ENCODE measurements at regions of chr1 and their contacts with region 1.

Region 1: DNA sequence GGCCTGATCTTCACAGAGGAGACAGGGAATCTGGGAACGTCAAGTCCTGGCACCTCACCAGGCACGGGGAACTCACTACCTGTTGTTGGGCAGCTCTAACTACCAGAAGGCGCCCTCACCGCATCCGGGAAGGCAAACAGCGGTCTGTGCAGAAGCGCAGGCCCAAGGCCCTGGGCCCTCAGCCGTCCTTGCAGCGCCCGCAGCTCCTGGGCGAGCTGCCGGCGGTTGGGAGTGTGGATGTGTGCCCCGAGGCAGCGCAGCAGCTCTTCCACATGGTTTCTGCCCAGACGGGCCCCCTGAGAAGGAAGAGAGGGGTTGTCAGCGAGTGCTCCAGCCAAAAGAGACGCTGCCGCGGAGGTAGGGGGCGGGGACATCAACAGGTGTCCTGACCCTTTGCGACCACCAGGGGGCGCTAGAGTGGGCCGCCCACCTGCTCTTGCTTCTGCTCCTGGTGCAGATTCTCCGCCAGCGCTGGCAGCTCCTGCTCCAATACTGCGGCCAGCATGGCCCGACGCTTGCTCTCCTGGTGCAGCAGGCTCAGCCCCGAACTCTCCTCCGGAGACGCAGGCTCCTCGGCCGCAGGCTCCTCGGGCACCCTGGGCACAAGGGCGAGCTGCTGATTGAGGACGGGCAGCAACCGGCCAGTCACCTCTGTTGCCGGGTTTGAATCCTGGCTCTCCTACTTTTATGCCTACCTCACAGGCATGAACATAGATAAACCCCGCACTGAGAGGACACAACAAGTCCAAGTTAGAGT is 9.3 kb downstream of the MAP3K6 start:
- DNase-seq: peak; percentile 80 to 84 (median 83)
- H3K4me3 ChIP-seq: peak overlapping the region; percentile 44 to 71
- H3K4me3 Mint-ChIP-seq: peak overlapping the region; percentile 74 to 85 (median 80)
- H3K27ac ChIP-seq: peak overlapping the region; percentile 57
- H3K27ac Mint-ChIP-seq: peak overlapping the region; percentile 72 to 90 (median 84)
- H3K4me1 ChIP-seq: peaks cover 47% of the 10 kb centered on the region
- H3K4me1 Mint-ChIP-seq: peaks cover 18 to 56% (median 40%) of the 10 kb centered on the region in 4 donors
- H3K27me3 ChIP-seq: no peaks in the 10 kb centered on the region
- H3K27me3 Mint-ChIP-seq: no peaks in the 10 kb centered on the region

Region 2: DNA sequence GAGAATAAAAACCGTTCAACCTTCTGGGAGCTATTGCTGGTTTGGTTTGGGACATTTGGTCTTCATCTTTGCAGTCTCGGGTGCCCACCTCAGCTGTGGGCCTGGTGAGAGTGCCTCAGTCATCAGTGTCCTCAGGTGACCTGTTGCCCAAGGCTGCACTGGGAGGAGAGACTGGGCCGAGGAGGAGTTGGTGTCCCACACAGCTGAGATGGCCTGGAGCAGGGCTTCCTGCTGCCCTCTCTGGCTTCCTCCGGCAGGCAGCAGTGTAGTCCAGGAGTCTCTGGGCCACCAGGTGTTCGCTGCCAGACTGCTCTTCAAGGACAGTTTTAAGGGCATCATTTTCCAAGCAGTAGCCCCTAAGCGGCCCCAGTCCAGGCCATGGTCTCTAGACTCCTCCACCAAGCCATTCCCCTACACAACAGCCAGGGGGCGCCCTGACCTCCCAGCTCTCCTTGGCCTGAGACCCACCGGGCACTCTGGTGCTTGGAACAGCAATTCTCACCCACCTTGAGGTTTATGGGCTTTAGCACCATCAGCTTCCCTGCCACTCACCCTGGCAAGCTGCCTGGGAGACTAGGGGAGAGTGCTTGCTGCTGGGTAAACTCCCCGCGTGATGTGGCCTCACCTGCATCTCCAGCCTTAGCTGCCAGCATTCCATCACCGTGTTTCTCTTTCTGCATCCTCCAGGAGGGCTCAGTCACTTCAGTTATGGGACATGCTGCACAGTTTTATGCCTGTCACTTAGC is 24.8 kb before region 1 on chr1:
- CTCF ChIA-PET with region 1: interaction called, 63 read pairs
- POLR2A ChIA-PET with region 1: interaction called, 19 read pairs
- intact Hi-C with region 1: no loop called
- DNase-seq: peak; percentile 54 to 65 (median 58)
- H3K4me3 ChIP-seq: no peak overlapping the region
- H3K4me3 Mint-ChIP-seq: peak overlapping the region in 2 of 8 donors; percentile 7 to 25
- H3K27ac ChIP-seq: peak overlapping the region; percentile 10
- H3K27ac Mint-ChIP-seq: peak overlapping the region in 6 of 7 donors; percentile 5 to 75 (median 61)
- H3K4me1 ChIP-seq: peaks cover 33% of the 10 kb centered on the region
- H3K4me1 Mint-ChIP-seq: peaks cover 22 to 48% (median 34%) of the 10 kb centered on the region in 4 donors
- H3K27me3 ChIP-seq: no peaks in the 10 kb centered on the region
- H3K27me3 Mint-ChIP-seq: no peaks in the 10 kb centered on the region

Region 3: DNA sequence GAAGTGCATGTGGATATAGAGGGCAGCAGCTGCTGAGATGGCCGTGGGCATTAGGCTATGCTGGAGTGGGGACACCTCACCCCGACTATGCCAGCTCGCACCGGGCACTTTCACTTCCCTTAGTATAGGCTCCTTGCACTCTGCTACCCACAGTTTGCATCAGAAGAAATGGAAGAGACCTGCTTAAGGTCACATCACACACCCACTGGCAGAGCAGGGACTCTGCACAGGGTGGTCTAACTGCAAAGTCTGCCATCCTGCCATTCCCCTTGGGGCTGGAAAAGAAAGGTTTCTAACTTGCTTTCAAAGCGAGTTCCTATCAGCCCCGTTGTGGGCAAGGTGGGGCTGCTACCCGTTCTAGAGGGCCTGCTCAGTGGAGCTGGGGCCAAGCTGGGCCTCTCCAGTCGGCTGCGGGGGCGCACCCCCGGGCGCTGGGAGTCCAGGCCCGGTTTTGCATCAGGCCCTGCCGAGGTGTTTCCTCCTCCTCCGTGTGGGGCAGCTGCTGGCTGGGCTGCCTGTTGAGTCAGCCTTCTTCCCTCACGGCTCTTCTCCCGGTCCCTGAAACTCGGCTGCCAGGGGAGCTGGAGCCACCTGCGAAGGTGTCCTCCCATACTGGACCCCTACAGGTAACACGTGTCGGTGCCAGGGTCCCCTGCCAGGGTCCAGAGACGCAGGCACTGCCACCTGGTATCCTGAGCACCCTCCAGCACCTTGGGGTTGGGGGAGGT is 15.8 kb before region 1 on chr1 and contains the start of gene SYTL1:
- CTCF ChIA-PET with region 1: interaction called, 105 read pairs
- POLR2A ChIA-PET with region 1: interaction called, 202 read pairs
- intact Hi-C with region 1: loop called (anchors 1 kb)
- DNase-seq: peak; percentile 63 to 77 (median 69)
- H3K4me3 ChIP-seq: peak within 1 kb of the TSS; percentile 82 to 94
- H3K4me3 Mint-ChIP-seq: peak within 1 kb of the TSS; percentile 90 to 99 (median 97)
- H3K27ac ChIP-seq: peak within 1 kb of the TSS; percentile 80
- H3K27ac Mint-ChIP-seq: peak within 1 kb of the TSS; percentile 92 to 96 (median 95)
- H3K4me1 ChIP-seq: peaks cover 48% of the 10 kb centered on the region
- H3K4me1 Mint-ChIP-seq: peaks cover 30 to 68% (median 47%) of the 10 kb centered on the region in 4 donors
- H3K27me3 ChIP-seq: no peaks in the 10 kb centered on the region
- H3K27me3 Mint-ChIP-seq: no peaks in the 10 kb centered on the region
- total RNA-seq, gene SYTL1: 146 to 158 TPM